ENCODE measurements at regions of chr5 and their contacts with region 1.

Region 1: GRCh38 chr5:139844472-139845145 is 49.0 kb downstream of the PSD2 start:
- DNase-seq: no peak
- H3K4me3 ChIP-seq: no peak overlapping the region
- H3K27ac ChIP-seq: no peak overlapping the region
- H3K4me1 ChIP-seq: no peaks in the 10 kb centered on the region
- H3K27me3 ChIP-seq: no peaks in the 10 kb centered on the region
- CTCF ChIP-seq: peak; percentile 57 to 75 (median 65)

Region 2: DNA sequence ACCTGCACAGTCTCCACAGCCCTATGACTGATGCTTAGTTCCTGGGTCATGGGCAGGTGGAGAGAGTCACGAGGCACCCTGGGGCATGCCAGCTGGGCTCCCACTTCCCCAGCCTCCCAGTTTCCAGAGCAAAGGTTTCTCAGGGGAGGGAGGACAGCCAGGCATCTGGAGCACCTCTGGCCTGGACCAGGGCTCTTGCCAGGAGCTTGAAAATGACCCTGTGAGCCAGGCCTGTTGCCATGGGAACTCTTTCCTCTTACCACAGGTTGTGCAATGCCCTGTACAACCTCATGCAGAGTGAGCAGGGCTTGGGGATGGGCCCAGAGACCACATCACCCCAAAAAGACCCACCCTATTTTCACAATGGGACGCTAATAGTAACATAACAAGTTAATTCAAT is 64.1 kb after region 1 on chr5:
- dilution Hi-C with region 1: no loop called
- DNase-seq: no peak
- H3K4me3 ChIP-seq: no peak overlapping the region
- H3K27ac ChIP-seq: no peak overlapping the region
- H3K4me1 ChIP-seq: peaks cover 24% of the 10 kb centered on the region
- H3K27me3 ChIP-seq: peaks cover 18% of the 10 kb centered on the region
- CTCF ChIP-seq: no peak

Region 3: GRCh38 chr5:139968547-139969261 is 124.1 kb after region 1 on chr5:
- dilution Hi-C with region 1: loop called (anchors 25 kb)
- DNase-seq: peak; percentile 21
- H3K4me3 ChIP-seq: no peak overlapping the region
- H3K27ac ChIP-seq: no peak overlapping the region
- H3K4me1 ChIP-seq: no peaks in the 10 kb centered on the region
- H3K27me3 ChIP-seq: peaks cover 4% of the 10 kb centered on the region
- CTCF ChIP-seq: peak; percentile 100